ENCODE measurements at regions of chr19 and their contacts with region 1.

Region 1: GRCh38 chr19:44113138-44113783 is at the start of gene ZNF225:
- DNase-seq: peak; percentile 97
- ATAC-seq: peak; percentile 98
- H3K4me3 ChIP-seq: peak within 1 kb of the TSS; percentile 99
- H3K27ac ChIP-seq: no peak within 1 kb of the TSS
- H3K4me1 ChIP-seq: peaks cover 9% of the 10 kb centered on the region
- H3K27me3 ChIP-seq: no peaks in the 10 kb centered on the region
- CTCF ChIP-seq: no peak
- total RNA-seq, gene ZNF225: 0.46 and 1.6 TPM in 2 replicates

Region 2: GRCh38 chr19:43934985-43935708 is 178.1 kb before region 1 on chr19 and contains the start of gene ZNF45:
- CTCF ChIA-PET with region 1: no interaction called
- POLR2A ChIA-PET with region 1: no interaction called
- intact Hi-C with region 1: loop called (anchors 1 kb)
- DNase-seq: peak; percentile 80
- ATAC-seq: peak; percentile 94
- H3K4me3 ChIP-seq: peak within 1 kb of the TSS; percentile 90
- H3K27ac ChIP-seq: no peak within 1 kb of the TSS
- H3K4me1 ChIP-seq: peaks cover 7% of the 10 kb centered on the region; the same call in 1 of the 2 replicates
- H3K27me3 ChIP-seq: no peaks in the 10 kb centered on the region
- CTCF ChIP-seq: no peak
- total RNA-seq, gene ZNF45: 5.8 and 7.8 TPM in 2 replicates

Region 3: DNA sequence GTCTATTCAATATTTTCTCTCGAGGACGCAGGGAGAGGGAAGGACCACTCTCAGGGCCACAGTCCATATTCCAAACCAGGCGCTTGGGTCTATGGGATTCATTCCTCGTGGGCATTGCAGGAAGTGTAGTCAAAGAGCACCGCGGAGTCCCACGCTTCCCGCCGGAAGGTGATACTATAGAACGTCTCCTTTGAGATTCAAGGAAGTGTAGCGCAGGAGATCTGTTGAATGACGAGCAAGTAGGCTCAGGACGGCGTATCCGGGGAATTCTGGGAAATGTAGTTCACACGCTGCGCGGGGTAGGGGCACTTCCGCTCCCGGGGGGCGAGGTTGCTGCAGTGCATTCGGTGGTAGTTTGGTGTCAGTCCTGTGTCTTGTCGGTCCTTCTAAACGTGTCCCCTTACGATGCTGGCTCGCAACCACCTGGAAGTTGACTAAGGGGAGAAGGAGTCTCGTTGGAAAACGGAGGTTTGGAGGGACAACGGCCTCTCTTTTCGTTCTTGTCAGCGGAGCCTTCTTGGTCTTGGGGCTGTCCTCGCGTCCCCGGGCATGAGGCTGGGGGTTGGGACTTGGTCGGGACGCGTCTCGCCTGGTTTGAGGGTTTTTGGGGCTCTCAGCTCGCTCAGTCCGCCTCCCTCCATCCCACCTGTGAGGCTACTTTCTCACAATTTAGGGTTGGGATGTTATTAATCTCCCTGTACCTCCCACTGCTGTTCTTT is 41.3 kb before region 1 on chr19 and contains the start of gene ZNF284:
- CTCF ChIA-PET with region 1: no interaction called
- POLR2A ChIA-PET with region 1: no interaction called
- intact Hi-C with region 1: loop called (anchors 2 kb)
- DNase-seq: peak; percentile 83
- ATAC-seq: peak; percentile 99
- H3K4me3 ChIP-seq: peak within 1 kb of the TSS; percentile 82
- H3K27ac ChIP-seq: no peak within 1 kb of the TSS
- H3K4me1 ChIP-seq: peaks cover 8% of the 10 kb centered on the region; the same call in 1 of the 2 replicates
- H3K27me3 ChIP-seq: no peaks in the 10 kb centered on the region
- CTCF ChIP-seq: no peak
- total RNA-seq, gene ZNF284: 0.69 and 0.81 TPM in 2 replicates

Region 4: DNA sequence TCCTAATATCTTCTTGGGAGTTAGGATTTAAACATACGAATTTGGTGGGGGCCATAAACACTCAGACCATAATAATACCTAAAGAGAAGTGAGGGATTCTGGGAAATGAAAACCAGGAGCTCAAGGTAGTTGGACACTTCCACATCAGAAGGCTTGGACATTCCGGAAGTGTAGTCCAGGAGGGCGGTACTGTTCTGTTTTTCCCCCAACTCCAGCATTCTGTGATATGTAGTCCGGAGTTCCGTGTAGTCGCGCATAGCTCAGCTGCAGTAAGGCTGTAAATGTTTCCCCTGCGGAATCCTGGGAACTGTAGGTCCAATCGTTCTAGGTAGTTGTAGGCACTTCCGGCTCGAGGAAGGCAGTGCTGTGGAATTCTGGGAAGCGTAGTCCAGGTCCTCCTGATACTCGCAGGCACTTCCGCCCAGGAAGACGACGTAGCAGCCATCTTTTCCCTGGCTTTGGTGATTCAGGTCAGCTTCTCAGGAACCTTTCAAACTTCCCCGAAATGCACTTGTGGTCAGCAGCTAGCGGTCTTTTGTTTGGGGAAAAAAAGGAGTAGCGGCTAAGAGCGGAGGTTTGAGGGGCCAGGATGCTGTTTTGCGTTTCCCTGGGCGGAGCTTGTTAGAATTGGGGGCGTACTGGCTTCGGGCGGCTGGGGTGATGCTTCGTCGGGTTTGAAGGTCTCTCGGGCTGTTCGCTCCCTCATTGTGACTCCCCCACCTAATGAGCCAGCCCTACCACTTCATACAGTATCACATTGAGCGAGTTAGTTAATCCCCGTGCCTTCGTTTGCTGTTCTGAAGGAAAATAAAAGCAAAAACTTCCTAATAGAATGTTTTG is 51.6 kb after region 1 on chr19 and contains the start of gene ZNF226:
- CTCF ChIA-PET with region 1: no interaction called
- POLR2A ChIA-PET with region 1: no interaction called
- intact Hi-C with region 1: loop called (anchors 1 kb)
- DNase-seq: peak; percentile 92
- ATAC-seq: peak; percentile 99
- H3K4me3 ChIP-seq: peak within 1 kb of the TSS; percentile 75
- H3K27ac ChIP-seq: peak within 1 kb of the TSS; percentile 13
- H3K4me1 ChIP-seq: peaks cover 5% of the 10 kb centered on the region; the same call in 1 of the 2 replicates
- H3K27me3 ChIP-seq: no peaks in the 10 kb centered on the region
- CTCF ChIP-seq: no peak
- total RNA-seq, gene ZNF226: 4.8 and 6.0 TPM in 2 replicates

Region 5: DNA sequence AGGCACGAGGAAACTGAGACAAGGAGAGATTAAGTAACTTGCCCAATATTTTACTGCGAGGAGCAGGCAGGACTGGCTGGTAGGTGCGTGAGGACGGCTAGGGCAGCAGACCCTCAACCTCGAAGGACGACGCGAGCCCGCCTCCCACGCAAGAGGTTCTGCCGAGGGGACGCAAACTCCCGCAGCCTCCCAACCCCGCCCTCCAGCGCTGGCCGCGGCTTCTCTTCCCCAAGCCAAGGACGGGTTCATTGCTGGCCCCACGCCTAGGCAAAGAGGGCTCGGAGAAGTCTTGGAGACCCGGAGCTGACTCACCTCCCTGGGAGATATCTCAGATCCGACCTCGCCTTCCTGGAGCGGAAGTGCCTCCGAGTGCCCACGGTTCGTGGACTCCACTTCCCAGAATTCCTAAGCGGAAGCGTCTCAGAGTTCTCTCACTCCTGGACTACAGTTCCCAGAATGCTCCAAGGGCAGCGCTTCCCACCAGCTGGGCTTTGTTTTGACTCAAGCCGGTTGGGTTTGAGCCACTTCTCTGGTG is 191.5 kb after region 1 on chr19 and contains the start of gene ZNF235:
- CTCF ChIA-PET with region 1: no interaction called
- POLR2A ChIA-PET with region 1: no interaction called
- intact Hi-C with region 1: loop called (anchors 1 kb)
- DNase-seq: peak; percentile 96
- ATAC-seq: peak; percentile 98
- H3K4me3 ChIP-seq: peak within 1 kb of the TSS; percentile 89
- H3K27ac ChIP-seq: peak within 1 kb of the TSS; percentile 67
- H3K4me1 ChIP-seq: peaks cover 10% of the 10 kb centered on the region
- H3K27me3 ChIP-seq: no peaks in the 10 kb centered on the region
- CTCF ChIP-seq: no peak
- total RNA-seq, gene ZNF235: 0.92 and 1.0 TPM in 2 replicates

Measured in PC-3 (cell line).